AG04450 (cell line): ENCODE measurements at regions of chr17 and their contacts with region 1.

Region 1: DNA sequence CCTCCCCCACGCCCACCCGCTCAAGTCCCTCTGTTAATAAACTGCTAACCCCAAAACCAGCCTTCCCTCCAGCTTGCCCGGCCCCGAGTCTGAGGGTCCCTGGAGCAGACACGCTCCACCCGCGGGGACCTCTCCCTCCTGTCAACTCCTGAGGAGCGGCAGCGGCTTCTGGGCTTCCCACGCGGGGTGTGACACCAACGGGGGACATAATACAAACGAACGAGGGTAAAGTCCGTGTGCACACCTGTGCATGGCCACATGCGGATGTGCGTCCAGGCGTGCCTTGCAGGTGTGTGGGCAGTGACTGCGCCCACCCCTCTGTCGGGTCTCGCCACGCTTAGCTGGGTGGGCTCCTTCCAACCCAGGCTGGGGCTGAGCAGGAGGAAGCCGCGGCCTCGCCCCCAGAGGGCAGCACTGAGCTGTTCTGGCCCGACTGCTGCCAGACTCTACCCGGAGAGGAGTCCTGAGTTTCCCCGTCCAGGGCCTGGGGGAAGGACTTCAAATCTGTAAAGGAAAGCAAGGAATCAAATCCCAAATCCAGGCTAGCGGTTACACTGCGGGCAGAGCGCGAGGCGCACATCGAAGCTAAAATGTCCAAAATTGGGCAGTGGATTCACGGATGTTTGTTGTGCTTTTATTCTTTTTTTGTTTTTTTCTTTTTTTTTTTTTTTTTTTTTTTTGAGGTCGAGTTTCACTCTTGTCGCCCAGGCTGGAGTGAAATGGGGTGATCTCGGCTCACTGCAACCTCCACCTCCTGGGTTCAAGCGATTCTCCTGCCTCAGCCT is 24.2 kb upstream of the KRT17 start:
- DNase-seq: peak; percentile 61
- H3K4me3 ChIP-seq: peak overlapping the region; percentile 55
- H3K27ac ChIP-seq: peak overlapping the region; percentile 47
- H3K27me3 ChIP-seq: peaks cover 3% of the 10 kb centered on the region
- CTCF ChIP-seq: peak; percentile 93

Region 2: DNA sequence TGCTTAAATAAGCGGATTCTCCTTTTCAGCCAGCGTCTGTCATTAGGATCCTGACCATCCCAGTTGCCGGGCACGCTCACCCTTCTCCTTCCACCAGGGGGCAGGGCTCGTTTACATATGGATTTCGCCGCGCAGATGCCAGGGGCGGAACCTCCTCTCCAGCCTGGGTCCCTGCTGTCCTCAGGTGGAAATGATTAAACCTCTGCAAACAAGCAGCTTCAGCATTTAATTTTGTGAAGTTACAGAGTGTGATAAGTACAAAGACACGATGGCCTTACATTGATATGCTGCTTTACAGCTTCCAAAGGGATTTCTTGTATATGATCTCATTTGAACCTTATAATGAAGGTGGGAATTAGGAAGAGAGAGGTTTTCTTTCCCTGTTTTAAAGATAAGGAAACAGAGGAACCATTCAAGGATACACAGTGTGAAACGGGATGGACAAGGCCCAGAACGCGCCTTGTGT is 845.0 kb before region 1 on chr17:
- CTCF ChIA-PET with region 1: interaction called, 13 read pairs
- POLR2A ChIA-PET with region 1: no interaction called
- DNase-seq: peak; percentile 16
- H3K4me3 ChIP-seq: no peak overlapping the region
- H3K27ac ChIP-seq: no peak overlapping the region
- H3K27me3 ChIP-seq: peaks cover 33% of the 10 kb centered on the region
- CTCF ChIP-seq: peak; percentile 95

Region 3: GRCh38 chr17:40846515-40847155 is 802.0 kb before region 1 on chr17:
- CTCF ChIA-PET with region 1: interaction called, 12 read pairs
- POLR2A ChIA-PET with region 1: no interaction called
- DNase-seq: no peak
- H3K4me3 ChIP-seq: no peak overlapping the region
- H3K27ac ChIP-seq: no peak overlapping the region
- H3K27me3 ChIP-seq: no peaks in the 10 kb centered on the region
- CTCF ChIP-seq: no peak

Region 4: GRCh38 chr17:40872416-40872815 is 776.2 kb before region 1 on chr17:
- CTCF ChIA-PET with region 1: interaction called, 16 read pairs
- POLR2A ChIA-PET with region 1: no interaction called
- DNase-seq: no peak
- H3K4me3 ChIP-seq: no peak overlapping the region
- H3K27ac ChIP-seq: no peak overlapping the region
- H3K27me3 ChIP-seq: peaks cover 3% of the 10 kb centered on the region
- CTCF ChIP-seq: no peak

Region 5: DNA sequence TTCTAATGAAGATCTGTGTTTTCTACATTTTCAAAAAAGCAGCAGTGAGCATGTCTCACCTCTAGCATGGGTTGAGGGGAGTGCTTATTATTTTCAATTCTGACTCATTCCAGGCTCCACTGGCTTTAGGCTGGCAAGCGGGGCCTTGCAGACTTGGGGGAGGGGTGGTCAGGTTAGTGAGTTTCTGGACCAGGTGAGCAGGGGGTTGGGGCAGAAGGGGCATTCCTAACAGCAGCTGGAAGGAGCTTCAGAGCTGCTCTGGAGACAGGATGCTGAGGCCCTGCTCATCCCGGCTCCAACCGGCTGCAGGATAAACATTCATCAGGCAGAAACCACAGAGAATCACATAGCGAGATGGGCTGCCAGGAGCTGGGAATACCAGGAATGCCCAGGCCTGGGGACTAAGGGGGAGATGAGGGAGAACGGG is 110.0 kb before region 1 on chr17:
- CTCF ChIA-PET with region 1: interaction called, 18 read pairs
- POLR2A ChIA-PET with region 1: interaction called, 3 read pairs
- DNase-seq: no peak
- H3K4me3 ChIP-seq: no peak overlapping the region
- H3K27ac ChIP-seq: peak overlapping the region; percentile 61
- H3K27me3 ChIP-seq: no peaks in the 10 kb centered on the region
- CTCF ChIP-seq: no peak

Region 6: DNA sequence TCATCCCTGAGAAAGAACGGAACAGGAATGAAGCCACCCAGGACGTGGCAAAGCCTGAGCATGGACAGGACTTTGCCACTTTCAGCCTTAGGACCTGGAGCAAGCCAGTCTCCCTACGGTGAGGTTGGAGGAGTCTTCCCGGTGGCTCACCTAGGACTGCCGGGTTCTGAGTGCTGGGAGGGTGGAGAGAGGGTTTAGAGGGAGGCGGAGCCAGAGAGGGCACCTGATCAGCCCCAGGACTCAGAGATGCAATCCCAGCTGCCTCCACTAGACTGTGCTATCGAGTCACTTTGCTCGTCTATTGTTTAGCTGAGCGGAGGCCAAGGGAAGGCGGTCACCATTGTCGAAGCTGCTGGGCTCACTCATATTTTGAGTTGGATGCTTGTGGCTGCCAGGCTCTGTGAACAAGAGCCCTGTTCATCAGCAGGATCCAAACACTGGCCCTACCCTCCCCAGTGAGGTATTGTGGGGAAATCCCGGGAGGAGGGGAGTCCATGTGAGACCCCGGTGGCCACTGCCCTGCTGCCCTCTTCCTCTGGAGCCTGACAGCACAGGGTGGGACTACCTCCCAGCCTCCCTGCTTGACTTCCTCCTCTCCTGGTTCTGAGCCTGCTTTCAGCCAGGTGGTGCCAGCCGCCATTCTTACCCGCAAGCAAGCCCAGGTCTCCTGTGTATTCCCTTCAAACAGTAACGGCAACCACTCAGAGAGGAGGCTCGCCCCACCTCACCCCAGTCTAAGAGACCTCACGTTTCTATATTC is 68.9 kb before region 1 on chr17:
- CTCF ChIA-PET with region 1: interaction called, 19 read pairs
- POLR2A ChIA-PET with region 1: no interaction called
- DNase-seq: peak; percentile 6
- H3K4me3 ChIP-seq: no peak overlapping the region
- H3K27ac ChIP-seq: no peak overlapping the region
- H3K27me3 ChIP-seq: peaks cover 28% of the 10 kb centered on the region
- CTCF ChIP-seq: peak; percentile 76

Region 7: DNA sequence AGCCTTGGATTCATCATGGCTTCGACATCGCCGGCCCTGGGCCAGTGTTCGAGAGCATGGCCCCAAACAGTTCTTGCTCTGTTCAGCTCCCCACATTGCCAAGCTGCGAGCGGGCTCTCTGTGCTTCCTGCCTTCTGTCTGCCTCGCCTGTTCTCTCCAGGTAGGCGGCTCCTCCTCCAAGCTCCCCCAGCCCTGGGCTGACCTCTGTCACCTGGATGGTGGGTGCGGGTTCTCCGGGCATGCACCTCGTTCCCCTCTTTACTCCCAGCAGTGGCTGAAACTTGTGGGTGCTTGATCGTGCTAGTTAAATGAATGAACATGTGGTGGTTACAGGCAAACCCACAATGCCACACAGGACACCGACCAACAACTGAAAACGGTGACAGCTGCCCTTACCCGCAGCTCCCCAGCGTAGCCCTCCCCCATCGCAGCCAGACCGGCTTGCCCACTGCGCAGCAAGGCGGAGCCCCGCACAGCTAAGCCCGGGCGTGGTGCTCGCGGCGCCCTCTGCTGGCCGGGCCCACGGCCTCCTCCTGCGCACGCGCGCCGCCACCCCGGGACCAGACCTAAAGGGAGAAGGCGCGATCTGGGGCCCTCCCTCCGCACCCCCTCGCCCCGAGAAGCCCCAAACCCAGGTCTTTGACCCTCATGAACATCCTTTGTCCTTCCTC is 17.1 kb after region 1 on chr17:
- CTCF ChIA-PET with region 1: interaction called, 285 read pairs
- POLR2A ChIA-PET with region 1: interaction called, 4 read pairs
- DNase-seq: peak; percentile 46
- H3K4me3 ChIP-seq: peak overlapping the region; percentile 60
- H3K27ac ChIP-seq: peak overlapping the region; percentile 85
- H3K27me3 ChIP-seq: no peaks in the 10 kb centered on the region
- CTCF ChIP-seq: peak; percentile 86

Region 8: GRCh38 chr17:41717408-41718286 is 69.0 kb after region 1 on chr17:
- CTCF ChIA-PET with region 1: no interaction called
- POLR2A ChIA-PET with region 1: no interaction called
- DNase-seq: no peak
- H3K4me3 ChIP-seq: no peak overlapping the region
- H3K27ac ChIP-seq: no peak overlapping the region
- H3K27me3 ChIP-seq: peaks cover 20% of the 10 kb centered on the region
- CTCF ChIP-seq: no peak

Region 9: DNA sequence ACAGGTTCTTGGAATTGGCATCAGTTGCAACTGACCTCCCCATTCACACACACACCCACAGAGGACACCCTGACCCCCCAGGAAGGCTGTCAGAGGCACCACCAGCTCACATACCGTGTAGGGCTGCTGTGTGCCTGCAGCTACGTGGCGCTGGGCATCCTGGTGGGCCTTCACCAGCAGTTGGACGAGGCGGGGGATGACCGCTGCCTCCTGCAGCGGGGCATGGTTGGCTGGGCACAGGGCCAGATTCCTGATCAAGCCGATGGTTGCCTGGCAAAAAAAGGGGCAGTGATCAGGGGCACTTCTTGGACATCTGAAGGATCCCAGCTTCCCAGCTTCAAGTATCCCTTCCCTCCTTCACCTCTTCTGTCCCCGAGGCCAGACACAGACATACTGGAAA is 110.0 kb after region 1 on chr17:
- CTCF ChIA-PET with region 1: no interaction called
- POLR2A ChIA-PET with region 1: no interaction called
- DNase-seq: no peak
- H3K4me3 ChIP-seq: no peak overlapping the region
- H3K27ac ChIP-seq: no peak overlapping the region
- H3K27me3 ChIP-seq: no peaks in the 10 kb centered on the region
- CTCF ChIP-seq: no peak

Region 10: DNA sequence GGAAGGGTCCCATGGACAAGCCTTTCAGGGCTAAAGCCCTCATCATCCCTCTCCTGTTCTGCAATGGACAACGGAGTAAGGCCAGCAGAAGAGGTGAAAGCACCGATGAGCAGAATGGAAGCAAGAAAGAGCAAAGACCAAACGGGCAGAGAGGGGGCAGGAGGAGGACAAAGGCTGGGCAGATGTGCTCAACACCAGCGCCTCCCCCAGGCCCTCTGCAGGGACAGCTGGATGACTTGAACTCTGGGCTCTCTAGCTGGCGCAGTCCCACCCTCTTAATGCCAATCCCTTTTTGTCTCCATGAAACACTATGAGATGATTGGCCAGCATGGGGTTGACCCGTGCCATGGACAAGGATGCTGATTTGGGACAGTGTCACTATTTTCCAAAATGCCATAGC is 248.1 kb after region 1 on chr17:
- CTCF ChIA-PET with region 1: no interaction called
- POLR2A ChIA-PET with region 1: no interaction called
- DNase-seq: no peak
- H3K4me3 ChIP-seq: no peak overlapping the region
- H3K27ac ChIP-seq: no peak overlapping the region
- H3K27me3 ChIP-seq: no peaks in the 10 kb centered on the region
- CTCF ChIP-seq: no peak